CD8-positive, alpha-beta T cell (primary cell): ENCODE measurements at regions of chr14 and their contacts with region 1.

Region 1: GRCh38 chr14:61280526-61281185 is 482 bp downstream of the TMEM30B start:
- DNase-seq: peak; percentile 63 to 90 (median 79)
- ATAC-seq: peak; percentile 85
- H3K4me3 ChIP-seq: peak overlapping the region; percentile 64 to 66
- H3K4me3 Mint-ChIP-seq: peak overlapping the region; percentile 93
- H3K27ac ChIP-seq: peak overlapping the region; percentile 71 to 82
- H3K27ac Mint-ChIP-seq: peak overlapping the region; percentile 95
- H3K4me1 ChIP-seq: peaks cover 15% of the 10 kb centered on the region
- H3K4me1 Mint-ChIP-seq: peaks cover 33% of the 10 kb centered on the region
- H3K27me3 ChIP-seq: no peaks in the 10 kb centered on the region
- H3K27me3 Mint-ChIP-seq: peaks cover 1% of the 10 kb centered on the region
- CTCF ChIP-seq: peak; percentile 62

Region 2: DNA sequence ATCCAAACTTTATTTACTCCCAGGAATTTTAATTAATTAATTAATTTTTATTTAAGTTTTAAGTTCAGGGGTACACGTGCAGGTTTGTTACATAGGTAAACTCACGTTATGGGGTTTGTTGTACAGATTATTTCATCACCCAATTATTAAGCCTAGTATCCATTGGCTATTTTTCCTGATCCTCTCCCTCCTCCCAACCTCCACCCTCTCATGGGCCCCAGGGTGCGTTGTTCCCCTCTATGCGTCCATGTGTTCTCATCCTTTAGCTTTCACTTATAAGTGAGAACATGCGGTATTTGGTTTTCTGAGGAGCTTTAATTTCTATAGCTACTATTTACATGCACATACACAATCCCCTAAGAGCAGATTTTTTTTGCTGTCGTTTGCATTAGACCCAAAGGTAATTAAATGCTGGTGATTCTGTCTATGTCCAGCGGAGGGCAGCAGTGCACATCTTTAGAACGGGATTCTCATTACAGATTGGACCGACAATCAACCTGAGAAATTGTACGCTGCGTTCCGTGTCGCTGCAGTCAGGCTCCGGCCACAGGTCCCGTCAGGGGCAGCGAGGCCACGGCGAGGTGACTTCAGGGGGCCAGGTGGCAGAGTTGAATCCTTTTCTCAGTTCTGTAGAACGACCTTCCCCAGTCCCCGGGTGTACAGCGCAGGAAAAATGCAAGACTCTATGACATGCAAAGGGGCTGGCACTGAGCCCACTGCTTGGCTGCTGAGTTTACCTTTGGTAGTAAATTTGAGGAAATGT is 11.2 kb before region 1 on chr14:
- CTCF ChIA-PET with region 1: interaction called, 163 read pairs
- POLR2A ChIA-PET with region 1: no interaction called
- intact Hi-C with region 1: no loop called
- DNase-seq: peak; percentile 63 to 87 (median 76)
- ATAC-seq: peak; percentile 96
- H3K4me3 ChIP-seq: peak overlapping the region; percentile 27 to 46
- H3K4me3 Mint-ChIP-seq: peak overlapping the region; percentile 75
- H3K27ac ChIP-seq: no peak overlapping the region
- H3K27ac Mint-ChIP-seq: no peak overlapping the region
- H3K4me1 ChIP-seq: no peaks in the 10 kb centered on the region
- H3K4me1 Mint-ChIP-seq: peaks cover 4% of the 10 kb centered on the region
- H3K27me3 ChIP-seq: peaks cover 0 to 4% of the 10 kb centered on the region in 2 experiments
- H3K27me3 Mint-ChIP-seq: peaks cover 38% of the 10 kb centered on the region
- CTCF ChIP-seq: peak; percentile 96

Region 3: DNA sequence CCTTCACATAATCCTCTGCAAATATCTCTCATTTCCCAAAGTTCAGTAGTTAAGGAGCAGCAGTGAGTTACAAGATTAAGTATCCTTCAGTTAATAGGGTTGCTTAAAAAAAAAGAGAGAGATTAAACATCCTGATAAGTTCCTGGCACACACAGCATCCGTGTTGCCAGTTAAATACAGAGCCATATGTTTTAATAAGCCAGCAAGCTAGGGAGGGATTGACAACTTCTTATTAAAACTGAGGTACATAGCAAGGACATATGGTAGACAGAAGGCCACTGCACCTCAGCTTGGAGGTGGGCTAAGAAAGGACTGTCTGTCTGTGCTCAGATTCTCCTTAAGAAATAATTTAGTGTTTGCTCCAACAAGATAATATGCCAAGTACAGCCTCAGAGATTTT is 10.0 kb after region 1 on chr14:
- CTCF ChIA-PET with region 1: interaction called, 163 read pairs
- POLR2A ChIA-PET with region 1: interaction called, 5 read pairs
- intact Hi-C with region 1: no loop called
- DNase-seq: no peak
- ATAC-seq: no peak
- H3K4me3 ChIP-seq: no peak overlapping the region
- H3K4me3 Mint-ChIP-seq: no peak overlapping the region
- H3K27ac ChIP-seq: no peak overlapping the region
- H3K27ac Mint-ChIP-seq: no peak overlapping the region
- H3K4me1 ChIP-seq: peaks cover 1% of the 10 kb centered on the region
- H3K4me1 Mint-ChIP-seq: peaks cover 12% of the 10 kb centered on the region
- H3K27me3 ChIP-seq: no peaks in the 10 kb centered on the region
- H3K27me3 Mint-ChIP-seq: no peaks in the 10 kb centered on the region
- CTCF ChIP-seq: no peak

Region 4: GRCh38 chr14:61396694-61397093 is 116.0 kb after region 1 on chr14:
- CTCF ChIA-PET with region 1: no interaction called
- POLR2A ChIA-PET with region 1: no interaction called
- intact Hi-C with region 1: no loop called
- DNase-seq: peak in 1 of 9 experiments; percentile 36
- ATAC-seq: no peak
- H3K4me3 ChIP-seq: no peak overlapping the region
- H3K4me3 Mint-ChIP-seq: peak overlapping the region; percentile 62
- H3K27ac ChIP-seq: peak overlapping the region in 1 of 2 experiments; percentile 49
- H3K27ac Mint-ChIP-seq: peak overlapping the region; percentile 90
- H3K4me1 ChIP-seq: peaks cover 99% of the 10 kb centered on the region
- H3K4me1 Mint-ChIP-seq: no peaks in the 10 kb centered on the region
- H3K27me3 ChIP-seq: no peaks in the 10 kb centered on the region
- H3K27me3 Mint-ChIP-seq: no peaks in the 10 kb centered on the region
- CTCF ChIP-seq: no peak

Region 5: DNA sequence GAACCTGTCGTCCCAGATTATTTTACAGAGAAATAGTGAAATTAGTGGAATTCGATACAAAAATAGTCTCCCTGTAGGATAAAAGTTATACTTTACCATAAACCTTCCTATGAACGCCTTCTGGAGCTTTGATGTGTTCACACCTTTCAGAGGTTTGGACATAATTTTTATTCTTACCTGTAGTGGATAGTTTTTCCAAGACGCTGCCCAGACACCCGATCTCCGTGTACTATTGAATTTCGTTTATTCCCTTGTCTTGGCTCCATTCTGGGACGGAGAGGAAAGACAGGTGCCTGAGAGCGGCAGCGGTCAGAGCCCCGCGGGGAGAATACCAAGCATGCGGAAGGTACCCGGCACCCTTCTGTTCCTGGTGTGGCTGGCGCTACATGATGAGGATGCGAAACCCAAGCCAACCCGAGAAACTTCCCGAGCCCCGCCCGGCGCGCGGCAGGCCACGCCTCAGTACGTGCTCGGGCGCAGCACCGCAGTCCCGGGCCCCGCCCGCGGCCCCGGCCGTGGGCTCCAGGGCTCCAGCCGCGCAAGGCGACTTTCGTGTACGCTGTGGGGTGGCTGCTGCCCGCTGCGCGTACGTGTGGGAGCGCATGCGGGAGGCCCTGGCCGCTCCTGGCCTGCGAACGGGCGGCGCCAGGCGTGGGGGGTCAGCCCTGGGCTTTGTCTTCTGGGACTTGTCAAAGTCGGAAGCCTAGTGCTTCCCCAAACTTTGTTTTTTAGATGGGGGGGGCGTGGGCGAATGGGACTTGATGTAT is 470.2 kb after region 1 on chr14:
- CTCF ChIA-PET with region 1: no interaction called
- POLR2A ChIA-PET with region 1: no interaction called
- intact Hi-C with region 1: loop called in 1 of 2 experiments (anchors 5 kb)
- DNase-seq: peak; percentile 44 to 90 (median 74)
- ATAC-seq: peak; percentile 96
- H3K4me3 ChIP-seq: peak overlapping the region; percentile 53 to 73
- H3K4me3 Mint-ChIP-seq: peak overlapping the region; percentile 88
- H3K27ac ChIP-seq: peak overlapping the region; percentile 43 to 45
- H3K27ac Mint-ChIP-seq: peak overlapping the region; percentile 80
- H3K4me1 ChIP-seq: peaks cover 4% of the 10 kb centered on the region
- H3K4me1 Mint-ChIP-seq: peaks cover 8% of the 10 kb centered on the region
- H3K27me3 ChIP-seq: no peaks in the 10 kb centered on the region
- H3K27me3 Mint-ChIP-seq: peaks cover 2% of the 10 kb centered on the region
- CTCF ChIP-seq: no peak